ENCODE measurements at regions of chr4 and their contacts with region 1.

Region 1: DNA sequence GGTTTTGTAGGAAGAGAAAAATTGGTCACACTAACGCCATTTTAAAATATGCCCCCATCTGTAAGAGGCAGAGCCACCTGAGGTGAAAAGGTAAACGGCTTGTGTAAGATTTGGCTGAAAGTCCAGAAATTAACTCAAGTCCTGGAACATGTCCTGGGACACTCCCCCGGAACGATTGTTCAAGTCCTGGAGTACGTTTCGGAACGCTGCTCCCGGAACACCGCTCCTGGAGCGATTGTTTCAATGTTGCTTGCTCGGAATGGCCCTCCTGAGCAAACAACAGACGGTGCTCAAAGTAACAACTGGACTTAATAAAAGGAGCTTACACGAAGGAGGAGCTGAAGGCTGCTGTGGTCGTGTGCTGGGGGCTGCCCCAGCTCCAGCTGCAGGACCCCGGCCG is 796.5 kb upstream of the SLIT2 start:
- DNase-seq: no peak
- H3K4me3 ChIP-seq: no peak overlapping the region
- H3K27ac ChIP-seq: no peak overlapping the region
- H3K4me1 ChIP-seq: no peaks in the 10 kb centered on the region
- H3K27me3 ChIP-seq: no peaks in the 10 kb centered on the region
- CTCF ChIP-seq: no peak
- EP300 ChIP-seq: no peak
- POLR2A ChIP-seq: no peak

Region 2: DNA sequence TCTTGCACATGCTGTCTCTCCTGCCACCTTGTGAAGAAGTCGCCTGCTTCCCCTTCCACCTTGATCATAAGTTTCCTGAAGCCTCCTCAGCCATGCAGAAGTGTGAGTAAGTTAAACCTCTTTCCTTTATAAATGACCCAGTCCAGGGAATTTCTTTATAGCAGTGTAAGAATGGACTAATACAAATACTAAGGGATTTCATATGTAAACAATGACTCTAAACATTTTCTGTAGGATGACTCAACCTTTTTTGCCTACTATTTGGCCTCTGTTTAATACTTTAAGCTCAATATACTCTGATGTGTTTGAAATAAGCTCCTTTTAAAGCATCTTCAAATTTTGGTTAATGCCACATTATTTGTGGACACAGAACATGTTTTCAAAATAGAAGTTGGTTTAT is 17.0 kb before region 1 on chr4:
- intact Hi-C with region 1: loop called (anchors 2 kb)
- DNase-seq: no peak
- H3K4me3 ChIP-seq: no peak overlapping the region
- H3K27ac ChIP-seq: no peak overlapping the region
- H3K4me1 ChIP-seq: no peaks in the 10 kb centered on the region
- H3K27me3 ChIP-seq: no peaks in the 10 kb centered on the region
- CTCF ChIP-seq: no peak
- EP300 ChIP-seq: no peak
- POLR2A ChIP-seq: no peak

Region 3: DNA sequence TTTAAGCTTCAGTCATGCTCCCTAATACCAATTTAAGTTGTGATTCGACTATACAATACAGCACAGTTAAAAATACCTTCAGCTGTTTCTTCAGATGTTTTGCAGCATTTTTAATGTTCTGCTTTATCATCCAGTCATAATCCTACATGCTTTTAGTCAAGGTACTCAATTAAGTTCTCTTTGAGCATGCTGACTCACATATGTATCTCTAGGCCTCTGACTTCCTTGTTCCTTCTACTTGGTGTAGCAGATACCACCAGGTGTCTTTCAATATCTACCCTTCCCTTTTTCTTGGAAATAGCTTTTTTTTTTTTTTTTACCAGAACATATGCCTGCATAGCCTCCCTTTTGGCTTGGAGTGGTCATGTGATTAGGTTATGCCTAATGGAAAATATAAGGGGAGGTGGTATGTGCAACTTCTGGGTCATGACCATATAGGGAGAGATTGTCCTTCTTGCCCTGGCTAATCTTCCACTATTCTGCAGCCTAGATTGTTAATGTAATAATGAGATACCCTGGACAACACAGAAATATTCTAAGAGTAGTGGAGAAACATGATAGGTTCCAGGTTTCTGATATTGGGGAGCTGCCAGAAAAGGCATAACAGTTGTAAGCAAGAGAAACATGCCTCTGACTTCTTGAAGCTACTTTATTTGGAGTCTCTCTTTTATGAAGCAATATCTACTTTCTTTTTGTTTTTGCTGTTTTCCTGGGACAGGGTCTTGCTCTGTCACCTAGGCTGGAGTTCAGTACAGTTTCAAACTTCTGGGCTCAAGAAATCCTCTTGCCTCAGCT is 59.3 kb after region 1 on chr4:
- intact Hi-C with region 1: no loop called
- DNase-seq: peak in 1 of 2 donors; percentile 12
- H3K4me3 ChIP-seq: no peak overlapping the region
- H3K27ac ChIP-seq: no peak overlapping the region
- H3K4me1 ChIP-seq: no peaks in the 10 kb centered on the region
- H3K27me3 ChIP-seq: no peaks in the 10 kb centered on the region
- CTCF ChIP-seq: no peak
- EP300 ChIP-seq: no peak
- POLR2A ChIP-seq: no peak

Measured in stomach (tissue), 19 donors.